ENCODE measurements at regions of chrX and their contacts with region 1.

Region 1: GRCh38 chrX:10350981-10351380 is 194.2 kb downstream of the CLCN4 start:
- DNase-seq: peak; percentile 22
- H3K4me3 Mint-ChIP-seq: peak overlapping the region; percentile 24
- H3K27ac Mint-ChIP-seq: peak overlapping the region; percentile 76
- H3K4me1 Mint-ChIP-seq: peaks cover 24% of the 10 kb centered on the region
- H3K27me3 Mint-ChIP-seq: no peaks in the 10 kb centered on the region
- CTCF ChIP-seq: no peak

Region 2: DNA sequence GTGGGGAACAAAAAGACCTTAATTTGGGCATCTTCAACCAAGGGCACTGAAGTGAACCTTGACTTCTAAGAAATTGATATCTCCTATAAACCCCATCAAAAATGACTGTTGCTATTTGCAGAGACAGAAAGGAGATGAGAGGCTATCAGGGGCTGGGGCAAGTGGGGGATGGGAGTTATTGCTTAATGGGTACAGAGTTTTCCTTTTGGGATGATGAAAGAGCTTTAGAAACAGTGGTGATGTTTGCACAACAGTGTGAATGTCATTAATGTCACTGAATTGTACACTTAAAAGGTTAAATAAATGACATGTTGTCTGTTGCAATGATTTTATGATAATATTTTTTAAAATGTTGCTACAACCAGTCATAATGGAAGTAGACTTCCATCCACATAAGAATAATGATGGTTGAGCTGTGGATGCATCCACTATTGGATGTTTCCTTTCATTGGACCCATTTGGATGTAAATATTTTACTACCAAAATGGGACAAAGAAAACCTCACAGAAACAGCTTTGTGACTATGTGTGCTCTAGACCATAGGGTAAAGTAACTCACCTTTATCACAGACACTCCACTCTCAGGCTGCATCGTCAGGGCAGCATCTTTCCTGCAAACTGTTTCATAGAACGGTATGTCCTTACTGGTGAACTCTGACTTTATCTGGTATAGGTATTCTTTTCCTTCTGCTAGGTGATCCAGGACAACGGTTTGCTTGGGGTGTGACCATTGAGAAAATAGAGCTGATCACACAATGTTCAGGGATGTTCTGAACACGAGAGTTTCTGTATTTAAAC is 1518.2 kb before region 1 on chrX:
- CTCF ChIA-PET with region 1: no interaction called
- intact Hi-C with region 1: loop called (anchors 10 kb)
- DNase-seq: no peak
- H3K4me3 Mint-ChIP-seq: no peak overlapping the region
- H3K27ac Mint-ChIP-seq: no peak overlapping the region
- H3K4me1 Mint-ChIP-seq: no peaks in the 10 kb centered on the region
- H3K27me3 Mint-ChIP-seq: no peaks in the 10 kb centered on the region
- CTCF ChIP-seq: no peak

Region 3: GRCh38 chrX:10146346-10146745 is 204.6 kb before region 1 on chrX:
- CTCF ChIA-PET with region 1: no interaction called
- intact Hi-C with region 1: no loop called
- DNase-seq: no peak
- H3K4me3 Mint-ChIP-seq: no peak overlapping the region
- H3K27ac Mint-ChIP-seq: no peak overlapping the region
- H3K4me1 Mint-ChIP-seq: no peaks in the 10 kb centered on the region
- H3K27me3 Mint-ChIP-seq: no peaks in the 10 kb centered on the region
- CTCF ChIP-seq: no peak

Measured in Calu3 (cell line).